ENCODE measurements at regions of chr1 and their contacts with region 1.

Region 1: DNA sequence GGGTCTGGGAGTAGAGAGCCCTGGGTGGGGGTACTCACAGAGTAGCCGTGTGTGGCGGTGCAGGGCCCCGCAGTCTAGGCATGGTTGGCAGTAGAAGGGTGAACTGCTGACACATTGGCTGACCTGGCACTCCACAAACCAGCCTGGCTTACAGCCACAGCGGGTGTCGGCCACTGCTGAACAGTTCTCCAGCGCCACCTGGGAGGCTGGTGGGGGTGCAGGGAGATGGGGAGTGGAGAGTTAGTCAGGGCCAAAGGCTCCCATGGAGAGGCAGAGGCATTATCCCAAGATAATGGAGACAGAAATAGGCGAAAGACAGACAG is 1.5 kb downstream of the TNFRSF25 start:
- DNase-seq: peak in 4 of 5 donors; percentile 25 to 65 (median 44)
- H3K4me3 ChIP-seq: peak overlapping the region; percentile 79 to 85
- H3K4me3 Mint-ChIP-seq: peak overlapping the region; percentile 88 to 99 (median 94)
- H3K27ac ChIP-seq: peak overlapping the region; percentile 95
- H3K27ac Mint-ChIP-seq: peak overlapping the region; percentile 97 to 100 (median 97)
- H3K4me1 ChIP-seq: peaks cover 60% of the 10 kb centered on the region
- H3K4me1 Mint-ChIP-seq: peaks cover 25 to 74% (median 47%) of the 10 kb centered on the region in 4 donors
- H3K27me3 ChIP-seq: no peaks in the 10 kb centered on the region
- H3K27me3 Mint-ChIP-seq: no peaks in the 10 kb centered on the region

Region 2: DNA sequence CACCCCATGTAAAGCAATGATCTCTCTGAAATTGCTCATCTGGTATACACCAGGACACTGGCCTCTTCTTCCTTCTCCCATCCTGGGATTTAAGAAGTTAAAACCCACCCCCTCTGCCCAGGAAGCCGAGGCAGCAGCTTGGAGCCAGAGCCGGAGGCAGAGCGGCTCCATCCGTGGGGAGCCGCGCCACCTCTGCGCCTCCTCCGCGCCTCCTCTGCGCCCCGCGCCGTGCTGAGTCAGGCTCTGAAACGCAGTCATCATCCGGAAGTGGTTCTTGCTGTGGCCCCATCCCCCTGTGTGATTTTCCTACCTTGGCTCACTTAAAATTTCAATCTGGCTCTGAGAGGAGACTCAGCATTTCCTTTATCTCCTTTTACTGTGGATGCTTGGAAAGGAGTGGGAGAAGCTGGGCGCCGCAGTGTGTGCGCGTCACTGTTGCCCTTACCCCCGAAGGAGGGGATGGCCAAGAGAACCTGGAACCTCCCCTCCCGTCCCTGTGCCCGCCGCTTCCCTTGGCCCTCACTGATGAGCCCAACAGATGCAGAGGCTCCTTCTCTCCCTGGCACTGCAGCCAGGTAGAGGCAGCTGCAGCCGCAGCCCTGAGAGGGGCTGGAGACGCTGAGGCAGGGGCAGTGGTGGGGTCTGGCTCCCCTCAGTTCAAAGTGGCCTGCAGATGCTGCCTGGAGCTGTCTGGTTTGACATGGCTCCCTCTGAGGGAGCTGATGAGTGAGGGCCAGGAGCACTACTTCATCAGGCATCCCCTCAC is 457.0 kb before region 1 on chr1:
- CTCF ChIA-PET with region 1: no interaction called
- POLR2A ChIA-PET with region 1: no interaction called
- intact Hi-C with region 1: no loop called
- DNase-seq: peak in 2 of 5 donors; percentile 35 to 37
- H3K4me3 ChIP-seq: no peak overlapping the region
- H3K4me3 Mint-ChIP-seq: peak overlapping the region in 3 of 8 donors; percentile 10 to 40 (median 12)
- H3K27ac ChIP-seq: no peak overlapping the region
- H3K27ac Mint-ChIP-seq: peak overlapping the region in 1 of 7 donors; percentile 70
- H3K4me1 ChIP-seq: peaks cover 12% of the 10 kb centered on the region
- H3K4me1 Mint-ChIP-seq: peaks cover 5 to 20% (median 12%) of the 10 kb centered on the region in 4 donors
- H3K27me3 ChIP-seq: no peaks in the 10 kb centered on the region
- H3K27me3 Mint-ChIP-seq: no peaks in the 10 kb centered on the region

Region 3: GRCh38 chr1:6026095-6026809 is 438.2 kb before region 1 on chr1:
- CTCF ChIA-PET with region 1: no interaction called
- POLR2A ChIA-PET with region 1: no interaction called
- intact Hi-C with region 1: loop called (anchors 2 kb)
- DNase-seq: peak; percentile 89 to 96 (median 90)
- H3K4me3 ChIP-seq: peak overlapping the region; percentile 54 to 89
- H3K4me3 Mint-ChIP-seq: peak overlapping the region; percentile 88 to 99 (median 92)
- H3K27ac ChIP-seq: peak overlapping the region; percentile 89
- H3K27ac Mint-ChIP-seq: peak overlapping the region; percentile 96 to 99 (median 98)
- H3K4me1 ChIP-seq: peaks cover 53% of the 10 kb centered on the region
- H3K4me1 Mint-ChIP-seq: peaks cover 43 to 74% (median 56%) of the 10 kb centered on the region in 4 donors
- H3K27me3 ChIP-seq: no peaks in the 10 kb centered on the region
- H3K27me3 Mint-ChIP-seq: no peaks in the 10 kb centered on the region

Region 4: GRCh38 chr1:6393400-6394187 is 70.9 kb before region 1 on chr1 and contains the start of gene ACOT7:
- CTCF ChIA-PET with region 1: no interaction called
- POLR2A ChIA-PET with region 1: interaction called, 17 read pairs
- intact Hi-C with region 1: no loop called
- DNase-seq: peak; percentile 90 to 93 (median 91)
- H3K4me3 ChIP-seq: peak within 1 kb of the TSS in 1 of 2 donors; percentile 61
- H3K4me3 Mint-ChIP-seq: peak within 1 kb of the TSS; percentile 86 to 94 (median 90)
- H3K27ac ChIP-seq: peak within 1 kb of the TSS; percentile 67
- H3K27ac Mint-ChIP-seq: peak within 1 kb of the TSS; percentile 91 to 97 (median 94)
- H3K4me1 ChIP-seq: peaks cover 25% of the 10 kb centered on the region
- H3K4me1 Mint-ChIP-seq: peaks cover 12 to 29% (median 18%) of the 10 kb centered on the region in 4 donors
- H3K27me3 ChIP-seq: no peaks in the 10 kb centered on the region
- H3K27me3 Mint-ChIP-seq: no peaks in the 10 kb centered on the region
- total RNA-seq, gene ACOT7: 2.7 to 3.1 TPM

Region 5: DNA sequence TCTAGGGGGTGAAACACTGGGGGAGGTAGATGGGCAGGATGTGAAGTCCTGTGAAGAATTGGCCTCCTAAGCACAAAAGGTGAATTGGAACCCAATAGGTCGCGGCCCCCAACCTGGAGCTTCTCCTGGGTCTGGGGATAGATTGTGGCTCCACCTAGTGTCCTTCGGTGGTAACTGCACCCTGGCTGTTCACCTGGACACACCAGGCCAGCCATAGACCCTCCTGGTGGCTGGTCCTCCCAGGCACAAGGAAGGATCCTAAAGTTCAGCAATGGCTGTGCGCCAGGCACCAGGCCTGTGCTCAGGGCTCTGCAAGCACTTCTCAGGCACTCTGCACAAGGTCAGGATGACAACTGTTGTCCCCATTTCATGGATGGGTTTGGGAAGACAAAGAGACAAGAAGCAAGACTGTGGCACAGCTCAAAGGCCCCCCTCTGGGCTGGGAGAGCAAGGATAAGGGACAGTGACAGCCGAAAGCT is 26.4 kb before region 1 on chr1:
- CTCF ChIA-PET with region 1: interaction called, 18 read pairs
- POLR2A ChIA-PET with region 1: interaction called, 390 read pairs
- intact Hi-C with region 1: no loop called
- DNase-seq: peak; percentile 68 to 78 (median 71)
- H3K4me3 ChIP-seq: no peak overlapping the region
- H3K4me3 Mint-ChIP-seq: peak overlapping the region in 4 of 8 donors; percentile 20 to 83 (median 36)
- H3K27ac ChIP-seq: no peak overlapping the region
- H3K27ac Mint-ChIP-seq: peak overlapping the region in 3 of 7 donors; percentile 41 to 75 (median 44)
- H3K4me1 ChIP-seq: peaks cover 5% of the 10 kb centered on the region
- H3K4me1 Mint-ChIP-seq: peaks cover 7 to 14% (median 9%) of the 10 kb centered on the region in 4 donors
- H3K27me3 ChIP-seq: no peaks in the 10 kb centered on the region
- H3K27me3 Mint-ChIP-seq: peaks cover 11 to 12% of the 10 kb centered on the region in 2 donors

Region 6: DNA sequence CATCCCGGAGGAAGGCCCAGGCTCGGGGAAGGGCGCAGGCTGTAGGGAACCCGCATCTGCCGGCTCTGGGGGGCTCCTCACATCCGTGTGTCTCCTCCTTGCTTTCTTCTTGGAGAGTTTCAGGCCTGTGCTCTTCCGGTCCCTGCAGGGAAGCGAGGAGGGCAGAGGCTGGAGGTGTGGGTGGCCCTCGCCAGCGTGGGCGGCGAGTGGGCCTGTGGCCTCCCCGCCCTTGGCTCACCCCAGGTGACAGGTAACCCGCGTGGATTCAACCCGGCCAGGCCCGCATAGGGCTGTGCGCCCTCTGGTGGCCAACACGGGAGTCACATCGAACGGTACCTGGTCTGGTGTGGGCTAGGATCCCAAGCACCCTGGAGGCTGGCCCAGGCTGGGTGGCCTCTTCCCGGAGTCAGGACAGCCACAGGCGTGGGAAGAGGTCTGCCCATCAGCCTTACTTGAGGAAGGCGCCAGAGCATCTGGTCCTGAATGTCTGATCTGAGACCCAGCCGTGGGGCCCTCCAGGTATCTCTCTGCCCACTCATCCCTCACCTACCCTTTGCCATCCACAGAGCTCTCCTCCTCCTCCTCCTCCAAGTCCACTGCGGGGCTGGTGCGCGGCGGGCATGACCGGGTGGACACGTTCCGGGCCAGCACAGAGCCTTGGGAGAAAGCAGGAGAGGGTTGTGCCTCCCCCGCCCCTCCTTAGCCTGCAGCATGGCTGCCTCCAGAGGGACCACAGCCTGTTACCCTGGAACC is 11.1 kb after region 1 on chr1:
- CTCF ChIA-PET with region 1: interaction called, 13 read pairs
- POLR2A ChIA-PET with region 1: interaction called, 40 read pairs
- intact Hi-C with region 1: loop called (anchors 1 kb)
- DNase-seq: peak; percentile 76 to 84 (median 79)
- H3K4me3 ChIP-seq: no peak overlapping the region
- H3K4me3 Mint-ChIP-seq: peak overlapping the region in 2 of 8 donors; percentile 35 to 49
- H3K27ac ChIP-seq: no peak overlapping the region
- H3K27ac Mint-ChIP-seq: peak overlapping the region in 2 of 7 donors; percentile 18 to 27
- H3K4me1 ChIP-seq: peaks cover 5% of the 10 kb centered on the region
- H3K4me1 Mint-ChIP-seq: peaks cover 2 to 8% (median 5%) of the 10 kb centered on the region in 4 donors
- H3K27me3 ChIP-seq: no peaks in the 10 kb centered on the region
- H3K27me3 Mint-ChIP-seq: no peaks in the 10 kb centered on the region

Region 7: DNA sequence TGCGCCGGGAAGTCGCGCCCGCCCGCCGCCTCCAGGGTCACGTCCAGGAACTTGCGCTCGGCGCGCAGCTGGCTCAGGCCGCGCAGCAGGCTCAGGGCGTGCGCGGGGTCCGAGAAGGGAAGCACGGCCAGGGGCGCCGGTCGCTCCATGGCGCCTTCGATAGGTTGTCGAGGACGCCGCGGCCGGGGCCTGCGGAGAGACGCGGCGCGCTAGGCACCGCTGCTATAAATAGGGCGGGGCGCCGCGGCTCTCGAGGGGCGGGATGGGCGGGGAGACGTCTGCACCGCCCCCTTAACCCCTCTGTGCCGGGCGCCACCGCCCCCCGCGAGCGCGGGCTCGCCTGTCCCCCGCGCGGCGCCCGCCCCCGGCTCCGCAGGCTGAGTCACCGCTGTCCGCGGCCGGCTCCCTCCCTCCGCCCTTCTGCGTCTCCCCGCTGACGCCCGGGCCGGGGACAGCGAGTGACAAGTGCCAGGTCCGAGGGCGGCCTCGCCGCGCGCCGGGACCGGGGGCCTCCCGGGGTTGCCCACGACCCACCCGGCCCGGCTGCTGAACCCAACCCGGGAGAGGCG is 138.3 kb after region 1 on chr1 and contains the start of gene KLHL21:
- CTCF ChIA-PET with region 1: no interaction called
- POLR2A ChIA-PET with region 1: interaction called, 46 read pairs
- intact Hi-C with region 1: loop called (anchors 2 kb)
- DNase-seq: peak; percentile 75 to 85 (median 82)
- H3K4me3 ChIP-seq: peak within 1 kb of the TSS; percentile 87 to 92
- H3K4me3 Mint-ChIP-seq: peak within 1 kb of the TSS; percentile 93 to 99 (median 98)
- H3K27ac ChIP-seq: peak within 1 kb of the TSS; percentile 88
- H3K27ac Mint-ChIP-seq: peak within 1 kb of the TSS; percentile 95 to 99 (median 97)
- H3K4me1 ChIP-seq: peaks cover 40% of the 10 kb centered on the region
- H3K4me1 Mint-ChIP-seq: peaks cover 6 to 43% (median 30%) of the 10 kb centered on the region in 4 donors
- H3K27me3 ChIP-seq: no peaks in the 10 kb centered on the region
- H3K27me3 Mint-ChIP-seq: no peaks in the 10 kb centered on the region
- total RNA-seq, gene KLHL21: 80.6 to 85.2 TPM

Region 8: DNA sequence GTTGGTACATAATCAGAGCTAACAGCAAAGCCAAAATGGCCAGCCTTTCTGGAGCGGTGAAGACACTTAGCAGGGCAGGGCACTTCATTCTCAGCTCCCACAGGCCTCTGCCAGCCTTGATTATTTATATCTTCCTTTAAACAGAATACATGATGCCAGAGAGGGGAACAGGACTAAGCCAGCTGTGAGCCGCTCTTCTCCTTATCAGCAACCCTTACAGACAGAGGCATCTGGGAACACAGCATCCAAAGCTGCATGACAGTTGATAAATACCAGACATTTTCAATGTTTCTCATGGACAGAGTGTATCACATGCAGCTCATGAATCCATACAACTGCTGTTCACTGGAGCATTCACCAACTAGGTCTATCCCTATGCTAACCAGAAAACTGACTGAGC is 208.1 kb after region 1 on chr1:
- CTCF ChIA-PET with region 1: no interaction called
- POLR2A ChIA-PET with region 1: no interaction called
- intact Hi-C with region 1: no loop called
- DNase-seq: no peak
- H3K4me3 ChIP-seq: no peak overlapping the region
- H3K4me3 Mint-ChIP-seq: no peak overlapping the region
- H3K27ac ChIP-seq: no peak overlapping the region
- H3K27ac Mint-ChIP-seq: peak overlapping the region in 1 of 7 donors; percentile 22
- H3K4me1 ChIP-seq: no peaks in the 10 kb centered on the region
- H3K4me1 Mint-ChIP-seq: no peaks in the 10 kb centered on the region
- H3K27me3 ChIP-seq: no peaks in the 10 kb centered on the region
- H3K27me3 Mint-ChIP-seq: no peaks in the 10 kb centered on the region

Region 9: DNA sequence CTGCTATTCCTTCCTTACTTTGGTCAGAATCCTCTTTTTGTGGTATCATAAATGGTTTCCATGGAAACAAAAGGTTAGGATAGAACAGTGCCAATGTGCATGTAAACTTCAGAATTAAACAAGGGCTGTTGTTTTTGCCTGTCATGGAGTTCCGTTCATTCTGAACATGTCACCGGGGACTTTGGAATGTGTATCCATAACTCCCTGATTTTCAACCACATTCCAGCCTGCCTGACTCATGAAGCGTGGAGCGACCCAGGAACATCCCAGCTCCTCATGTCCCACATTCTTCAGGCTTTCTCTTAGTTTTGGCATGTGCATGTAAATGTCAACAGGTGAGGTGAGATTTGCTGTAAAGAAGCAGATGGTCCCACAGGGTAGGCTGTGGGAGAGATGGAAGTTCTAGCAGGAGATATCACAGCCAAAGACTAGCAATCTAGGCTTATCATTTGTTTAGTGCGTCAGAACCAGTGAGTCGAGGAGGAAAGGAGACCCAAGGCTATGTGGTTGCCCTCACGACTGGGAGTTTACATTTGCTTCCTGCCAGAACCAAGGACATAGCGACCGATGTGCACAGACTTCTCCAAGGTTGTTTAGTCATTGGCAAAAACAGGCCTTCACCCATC is 260.2 kb after region 1 on chr1:
- CTCF ChIA-PET with region 1: no interaction called
- POLR2A ChIA-PET with region 1: no interaction called
- intact Hi-C with region 1: no loop called
- DNase-seq: no peak
- H3K4me3 ChIP-seq: no peak overlapping the region
- H3K4me3 Mint-ChIP-seq: no peak overlapping the region
- H3K27ac ChIP-seq: no peak overlapping the region
- H3K27ac Mint-ChIP-seq: no peak overlapping the region
- H3K4me1 ChIP-seq: no peaks in the 10 kb centered on the region
- H3K4me1 Mint-ChIP-seq: peaks cover 0 to 2% (median under 1%) of the 10 kb centered on the region in 4 donors
- H3K27me3 ChIP-seq: no peaks in the 10 kb centered on the region
- H3K27me3 Mint-ChIP-seq: peaks cover 8% of the 10 kb centered on the region in 2 donors